ENCODE measurements at regions of chr2 and their contacts with region 1.

Region 1: GRCh38 chr2:152189622-152190495 is 14.3 kb upstream of the STAM2 start:
- DNase-seq: peak; percentile 46
- H3K4me3 ChIP-seq: no peak overlapping the region
- H3K27ac ChIP-seq: no peak overlapping the region
- H3K4me1 ChIP-seq: no peaks in the 10 kb centered on the region
- H3K27me3 ChIP-seq: no peaks in the 10 kb centered on the region
- CTCF ChIP-seq: peak; percentile 65

Region 2: GRCh38 chr2:152627351-152627957 is 437.6 kb after region 1 on chr2:
- intact Hi-C with region 1: loop called (anchors 5 kb)
- DNase-seq: no peak
- H3K4me3 ChIP-seq: no peak overlapping the region
- H3K27ac ChIP-seq: no peak overlapping the region
- H3K4me1 ChIP-seq: no peaks in the 10 kb centered on the region
- H3K27me3 ChIP-seq: no peaks in the 10 kb centered on the region
- CTCF ChIP-seq: peak; percentile 41